ENCODE measurements at regions of chr3 and their contacts with region 1.

Region 1: DNA sequence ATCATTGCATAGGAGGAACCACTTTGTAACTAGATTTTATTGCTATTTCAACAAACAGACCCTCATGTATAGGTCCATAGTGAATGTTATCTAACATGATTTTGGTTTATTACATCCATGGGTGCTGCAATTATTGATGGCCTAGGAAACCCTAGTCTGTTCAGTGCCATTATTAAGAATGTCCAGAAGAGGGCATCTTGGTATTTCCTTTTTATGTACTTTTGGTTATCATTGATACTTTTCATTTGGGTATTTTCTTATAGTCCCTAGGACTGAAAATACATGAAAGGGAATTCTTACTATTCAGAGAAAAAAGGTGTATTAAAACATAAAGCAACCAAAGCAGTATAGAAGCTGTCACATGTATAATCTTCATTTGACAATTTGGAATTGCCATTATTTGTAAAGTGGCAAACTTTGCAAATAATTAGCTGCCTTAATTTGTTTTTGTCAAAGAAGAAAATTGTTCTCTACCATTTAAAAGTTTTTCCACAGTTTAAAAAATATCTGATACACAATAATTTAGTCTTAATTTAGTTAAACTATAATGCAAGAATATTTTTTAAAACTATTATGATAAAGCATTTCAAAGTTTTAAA is 48.7 kb downstream of the CNOT10 start:
- DNase-seq: peak; percentile 62
- ATAC-seq: peak; percentile 54; the same call in 2 of the 3 replicates
- H3K4me3 ChIP-seq: no peak overlapping the region
- H3K27ac ChIP-seq: no peak overlapping the region
- H3K4me1 ChIP-seq: no peaks in the 10 kb centered on the region
- H3K27me3 ChIP-seq: no peaks in the 10 kb centered on the region
- CTCF ChIP-seq: peak; percentile 73
- EP300 ChIP-seq: no peak
- POLR2A ChIP-seq: no peak
- RAD21 ChIP-seq: peak; percentile 50; the same call in 1 of the 2 replicates

Region 2: DNA sequence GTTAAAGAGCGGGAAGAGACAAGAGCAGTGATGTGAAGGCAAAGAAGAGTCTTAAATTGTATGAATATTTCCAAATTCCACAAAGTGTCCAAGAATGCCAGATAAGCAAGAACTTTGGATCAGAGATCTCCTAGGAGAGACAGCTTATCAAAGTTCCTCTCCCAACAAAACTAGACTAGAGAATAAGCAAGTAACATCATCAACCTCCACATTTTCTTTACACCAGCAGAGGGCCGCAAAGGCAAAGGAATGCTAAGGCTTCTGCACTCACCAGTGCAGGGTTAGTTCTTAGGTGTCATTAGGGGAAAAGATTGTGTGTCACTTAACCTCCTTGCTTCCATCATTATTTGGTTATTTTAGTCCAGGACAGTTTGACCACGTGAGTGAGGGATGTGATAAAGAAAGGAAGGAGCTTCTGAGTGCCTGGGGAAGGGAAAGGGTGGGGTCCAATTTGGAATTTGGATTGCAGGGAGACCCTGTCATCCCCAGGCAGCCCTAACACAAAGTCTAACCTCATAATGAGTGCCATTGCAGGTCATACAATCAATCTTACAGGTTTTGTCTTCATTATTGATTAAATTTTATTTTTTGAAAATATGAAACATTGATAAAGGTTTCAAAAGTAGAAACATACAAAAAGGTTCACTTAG is 223.5 kb before region 1 on chr3:
- CTCF ChIA-PET with region 1: no interaction called
- POLR2A ChIA-PET with region 1: no interaction called
- in situ Hi-C with region 1: no loop called
- intact Hi-C with region 1: loop called (anchors 5 kb)
- DNase-seq: peak; percentile 71
- ATAC-seq: peak; percentile 98
- H3K4me3 ChIP-seq: no peak overlapping the region
- H3K27ac ChIP-seq: no peak overlapping the region
- H3K4me1 ChIP-seq: peaks cover 9% of the 10 kb centered on the region
- H3K27me3 ChIP-seq: peaks cover 0 to 1% of the 10 kb centered on the region in 2 experiments; a peak in 1 of 5 replicates
- CTCF ChIP-seq: peak; percentile 92
- EP300 ChIP-seq: no peak
- POLR2A ChIP-seq: no peak
- RAD21 ChIP-seq: peak; percentile 88

Region 3: GRCh38 chr3:32781210-32781968 is 47.7 kb after region 1 on chr3:
- CTCF ChIA-PET with region 1: interaction called, 6 read pairs
- POLR2A ChIA-PET with region 1: no interaction called
- in situ Hi-C with region 1: loop called (anchors 5 kb)
- intact Hi-C with region 1: loop called (anchors 1 kb)
- DNase-seq: peak; percentile 83
- ATAC-seq: peak; percentile 85
- H3K4me3 ChIP-seq: peak overlapping the region; percentile 68 to 81 (median 71); a peak in 5 of 6 replicates
- H3K27ac ChIP-seq: peak overlapping the region; percentile 85
- H3K4me1 ChIP-seq: peaks cover 43% of the 10 kb centered on the region
- H3K27me3 ChIP-seq: no peaks in the 10 kb centered on the region; a peak in 1 of 5 replicates
- CTCF ChIP-seq: peak; percentile 90
- EP300 ChIP-seq: peak in 1 of 2 experiments; percentile 51; a peak in 1 of 4 replicates
- POLR2A ChIP-seq: peak; percentile 59 to 72
- RAD21 ChIP-seq: peak; percentile 90

Region 4: GRCh38 chr3:32901432-32902409 is 168.0 kb after region 1 on chr3:
- CTCF ChIA-PET with region 1: no interaction called
- POLR2A ChIA-PET with region 1: no interaction called
- in situ Hi-C with region 1: no loop called
- intact Hi-C with region 1: loop called (anchors 10 kb)
- DNase-seq: peak; percentile 51
- ATAC-seq: peak; percentile 41
- H3K4me3 ChIP-seq: peak overlapping the region; percentile 40 to 57 (median 50); a peak in 5 of 6 replicates
- H3K27ac ChIP-seq: peak overlapping the region; percentile 16
- H3K4me1 ChIP-seq: peaks cover 17% of the 10 kb centered on the region
- H3K27me3 ChIP-seq: no peaks in the 10 kb centered on the region
- CTCF ChIP-seq: peak; percentile 55
- EP300 ChIP-seq: no peak
- POLR2A ChIP-seq: no peak
- RAD21 ChIP-seq: no peak

Region 5: DNA sequence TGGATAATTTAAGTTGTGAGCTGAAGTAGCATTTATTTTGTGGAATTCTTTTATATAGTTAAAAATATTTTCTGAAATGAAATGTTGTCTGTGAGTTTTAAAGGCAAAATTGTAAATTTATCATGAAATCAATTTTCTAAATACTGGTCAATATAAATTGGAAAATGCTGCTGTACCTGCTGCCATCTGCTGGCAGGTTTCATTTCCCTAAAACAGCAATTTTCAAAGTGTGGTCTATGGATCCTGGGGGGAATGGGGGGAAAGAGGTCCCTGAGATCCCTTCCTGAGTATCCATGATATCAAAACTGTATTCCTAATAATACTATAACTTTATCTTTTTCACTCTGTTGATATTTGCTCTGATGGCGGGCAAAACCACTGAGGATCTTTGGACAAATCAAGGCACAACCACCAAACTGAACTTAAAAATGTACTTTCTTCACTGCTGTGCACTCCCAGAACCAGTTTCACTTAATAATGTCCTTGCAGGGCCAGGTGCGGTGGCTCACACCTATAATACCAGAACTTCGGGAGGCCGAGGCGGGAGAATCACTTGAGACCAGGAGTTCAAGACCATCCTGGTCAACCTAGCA is 200.5 kb after region 1 on chr3:
- CTCF ChIA-PET with region 1: interaction called, 11 read pairs
- POLR2A ChIA-PET with region 1: no interaction called
- in situ Hi-C with region 1: loop called (anchors 5 kb)
- intact Hi-C with region 1: loop called (anchors 1 kb)
- DNase-seq: no peak
- ATAC-seq: peak; percentile 55; the same call in 2 of the 3 replicates
- H3K4me3 ChIP-seq: no peak overlapping the region
- H3K27ac ChIP-seq: no peak overlapping the region
- H3K4me1 ChIP-seq: peaks cover 11% of the 10 kb centered on the region
- H3K27me3 ChIP-seq: no peaks in the 10 kb centered on the region; a peak in 1 of 5 replicates
- CTCF ChIP-seq: peak; percentile 72
- EP300 ChIP-seq: no peak
- POLR2A ChIP-seq: no peak
- RAD21 ChIP-seq: peak; percentile 34; the same call in 1 of the 2 replicates

Region 6: DNA sequence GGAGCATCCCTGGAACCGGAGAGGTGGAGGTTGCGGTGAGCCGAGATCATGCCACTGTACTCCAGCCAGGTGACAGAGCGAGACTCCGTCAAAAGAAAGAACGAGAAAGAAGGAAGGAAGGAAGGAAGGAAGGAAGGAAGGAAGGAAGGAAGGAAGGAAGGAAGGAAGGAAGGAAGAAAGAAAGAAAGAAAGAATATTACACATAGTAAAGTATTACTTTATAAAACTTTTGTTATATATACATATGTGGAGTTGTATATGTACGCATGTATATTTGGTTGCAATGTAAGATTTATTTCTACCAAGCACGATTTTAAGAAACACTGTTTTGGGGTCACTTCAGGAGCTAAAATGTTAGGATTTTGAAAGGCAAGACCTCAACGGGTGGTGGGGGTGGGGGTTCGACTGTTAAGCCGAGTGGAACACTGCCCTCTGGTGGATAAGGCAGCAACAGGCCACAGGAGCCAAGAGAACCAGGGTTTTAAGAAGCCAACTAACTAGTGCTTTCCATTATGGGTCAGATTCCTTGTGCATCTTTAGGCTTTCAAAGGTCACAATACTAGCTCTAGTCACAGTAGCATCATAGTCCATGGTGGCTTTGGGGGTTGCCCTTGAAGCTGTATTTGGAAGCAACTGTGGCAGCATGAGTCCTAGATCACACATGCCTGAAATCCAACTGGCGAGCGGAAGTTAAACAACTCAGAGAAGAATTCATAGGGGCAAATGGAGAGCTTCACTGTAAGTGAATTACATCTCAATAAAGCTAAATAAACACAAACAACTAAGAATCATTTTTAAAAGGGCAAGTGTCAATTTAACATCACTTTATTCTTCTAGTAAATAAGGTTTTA is 340.7 kb after region 1 on chr3:
- CTCF ChIA-PET with region 1: no interaction called
- POLR2A ChIA-PET with region 1: no interaction called
- in situ Hi-C with region 1: loop called (anchors 25 kb)
- intact Hi-C with region 1: no loop called
- DNase-seq: peak; percentile 58
- ATAC-seq: peak; percentile 90
- H3K4me3 ChIP-seq: no peak overlapping the region
- H3K27ac ChIP-seq: no peak overlapping the region
- H3K4me1 ChIP-seq: peaks cover 12% of the 10 kb centered on the region
- H3K27me3 ChIP-seq: no peaks in the 10 kb centered on the region
- CTCF ChIP-seq: peak; percentile 92
- EP300 ChIP-seq: no peak
- POLR2A ChIP-seq: no peak
- RAD21 ChIP-seq: peak; percentile 86

Measured in HepG2 (cell line).